Psoas muscle (tissue), 8 donors: ENCODE measurements at regions of chr3 and their contacts with region 1.

Region 1: GRCh38 chr3:30606301-30607031 is at the start of gene TGFBR2:
- DNase-seq: peak; percentile 96 to 97
- ATAC-seq: peak; percentile 96 to 97 (median 97)
- H3K4me3 ChIP-seq: peak within 1 kb of the TSS; percentile 89
- H3K27ac ChIP-seq: peak within 1 kb of the TSS; percentile 91
- H3K4me1 ChIP-seq: peaks cover 8% of the 10 kb centered on the region
- H3K27me3 ChIP-seq: no peaks in the 10 kb centered on the region
- CTCF ChIP-seq: peak; percentile 23
- total RNA-seq, gene TGFBR2: 36.0 to 51.8 (median 44.6) TPM

Region 2: GRCh38 chr3:30356866-30357753 is 249.4 kb before region 1 on chr3:
- intact Hi-C with region 1: no loop called
- DNase-seq: no peak
- ATAC-seq: no peak
- H3K4me3 ChIP-seq: no peak overlapping the region
- H3K27ac ChIP-seq: no peak overlapping the region
- H3K4me1 ChIP-seq: peaks cover 20% of the 10 kb centered on the region
- H3K27me3 ChIP-seq: no peaks in the 10 kb centered on the region
- CTCF ChIP-seq: no peak

Region 3: DNA sequence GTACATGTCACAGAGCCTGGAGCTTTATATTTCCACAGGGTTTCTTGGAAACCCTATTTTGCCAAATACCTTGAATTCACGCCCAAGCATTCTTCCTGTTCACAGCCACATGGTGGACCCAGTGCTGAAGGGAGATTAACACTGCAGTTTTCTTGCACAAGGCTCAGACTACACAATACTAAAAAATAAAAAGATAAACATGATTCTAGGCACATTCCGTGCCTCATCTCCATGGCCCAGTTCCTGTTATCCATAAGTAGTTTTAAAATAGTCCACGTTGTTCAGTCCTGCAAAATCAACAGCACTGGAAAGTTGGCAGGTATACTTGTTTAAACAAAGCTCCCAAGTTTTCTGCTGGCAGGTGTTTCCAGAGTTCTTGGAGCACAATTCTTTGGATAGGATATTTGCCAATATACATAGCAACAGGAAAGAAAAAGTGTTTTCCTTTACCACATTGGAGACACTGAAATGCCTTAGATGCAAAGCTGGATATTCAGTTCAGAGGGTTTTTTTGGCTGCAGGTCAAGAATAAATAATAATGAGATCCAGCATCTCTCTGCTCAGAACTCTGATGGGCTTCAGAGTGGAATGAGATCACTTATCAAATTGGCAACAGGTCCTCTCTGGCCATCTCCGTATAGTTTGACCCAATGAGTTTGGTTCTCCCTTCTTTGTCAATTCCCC is 88.1 kb before region 1 on chr3:
- intact Hi-C with region 1: loop called in 1 of 2 experiments (anchors 5 kb)
- DNase-seq: no peak
- ATAC-seq: peak; percentile 9 to 81 (median 72)
- H3K4me3 ChIP-seq: no peak overlapping the region
- H3K27ac ChIP-seq: peak overlapping the region; percentile 38
- H3K4me1 ChIP-seq: peaks cover 11% of the 10 kb centered on the region
- H3K27me3 ChIP-seq: no peaks in the 10 kb centered on the region
- CTCF ChIP-seq: no peak

Region 4: GRCh38 chr3:30644593-30645012 is 38.1 kb after region 1 on chr3:
- intact Hi-C with region 1: loop called in 1 of 2 experiments (anchors 5 kb)
- DNase-seq: peak in 1 of 2 donors; percentile 38
- ATAC-seq: peak in 1 of 4 donors; percentile 45
- H3K4me3 ChIP-seq: no peak overlapping the region
- H3K27ac ChIP-seq: peak overlapping the region; percentile 65
- H3K4me1 ChIP-seq: peaks cover 46% of the 10 kb centered on the region
- H3K27me3 ChIP-seq: no peaks in the 10 kb centered on the region
- CTCF ChIP-seq: no peak

Region 5: DNA sequence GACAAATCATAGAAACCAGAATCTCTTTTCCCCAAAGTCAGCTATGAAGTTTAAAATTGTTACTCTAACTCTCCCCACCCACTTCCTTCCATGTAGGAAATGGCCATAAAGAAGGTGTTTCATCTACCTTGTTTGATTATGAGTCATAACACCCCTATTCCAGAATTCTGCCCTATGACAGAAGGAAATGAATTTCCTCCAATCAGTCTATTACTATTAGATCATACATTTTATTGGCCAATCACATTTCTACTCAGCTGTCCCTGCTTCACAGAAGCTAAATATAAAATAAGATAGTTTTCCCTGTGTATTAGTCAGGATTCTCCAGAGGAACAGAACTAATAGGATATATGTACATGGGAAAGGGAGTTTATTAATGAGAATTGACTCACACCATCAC is 102.0 kb after region 1 on chr3:
- intact Hi-C with region 1: no loop called
- DNase-seq: no peak
- ATAC-seq: no peak
- H3K4me3 ChIP-seq: no peak overlapping the region
- H3K27ac ChIP-seq: no peak overlapping the region
- H3K4me1 ChIP-seq: no peaks in the 10 kb centered on the region
- H3K27me3 ChIP-seq: no peaks in the 10 kb centered on the region
- CTCF ChIP-seq: no peak